Dendritic cell treated with granulocyte-macrophage colony-stimulating factor and Interleukin-4, amounts not matched to agents 40 ng/mL and 50 ng/mL, for 4 days (primary cell): ENCODE measurements at regions of chr1 and their contacts with region 1.

Region 1: DNA sequence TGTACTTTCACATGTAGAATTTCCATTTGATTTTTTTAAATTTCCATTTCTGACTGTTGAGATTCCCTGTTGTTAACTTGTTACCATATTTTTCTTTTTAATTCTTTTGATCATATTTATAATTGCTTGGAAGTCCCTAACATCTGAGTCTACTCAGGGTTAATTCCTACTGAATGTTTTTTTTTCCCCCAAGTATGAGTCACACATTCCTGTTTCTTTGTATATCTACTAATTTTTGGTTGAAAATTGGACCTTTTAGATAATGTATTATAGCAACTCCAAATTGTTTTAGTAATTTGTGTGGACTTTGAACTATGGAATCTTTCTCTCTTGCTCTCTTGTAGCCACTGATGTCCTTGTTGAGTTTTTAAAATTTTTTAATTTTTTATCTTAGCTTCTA is 54.6 kb downstream of the STXBP3 start:
- H3K4me3 Mint-ChIP-seq: no peak overlapping the region
- H3K27ac Mint-ChIP-seq: no peak overlapping the region
- H3K4me1 Mint-ChIP-seq: no peaks in the 10 kb centered on the region
- H3K27me3 Mint-ChIP-seq: no peaks in the 10 kb centered on the region

Region 2: DNA sequence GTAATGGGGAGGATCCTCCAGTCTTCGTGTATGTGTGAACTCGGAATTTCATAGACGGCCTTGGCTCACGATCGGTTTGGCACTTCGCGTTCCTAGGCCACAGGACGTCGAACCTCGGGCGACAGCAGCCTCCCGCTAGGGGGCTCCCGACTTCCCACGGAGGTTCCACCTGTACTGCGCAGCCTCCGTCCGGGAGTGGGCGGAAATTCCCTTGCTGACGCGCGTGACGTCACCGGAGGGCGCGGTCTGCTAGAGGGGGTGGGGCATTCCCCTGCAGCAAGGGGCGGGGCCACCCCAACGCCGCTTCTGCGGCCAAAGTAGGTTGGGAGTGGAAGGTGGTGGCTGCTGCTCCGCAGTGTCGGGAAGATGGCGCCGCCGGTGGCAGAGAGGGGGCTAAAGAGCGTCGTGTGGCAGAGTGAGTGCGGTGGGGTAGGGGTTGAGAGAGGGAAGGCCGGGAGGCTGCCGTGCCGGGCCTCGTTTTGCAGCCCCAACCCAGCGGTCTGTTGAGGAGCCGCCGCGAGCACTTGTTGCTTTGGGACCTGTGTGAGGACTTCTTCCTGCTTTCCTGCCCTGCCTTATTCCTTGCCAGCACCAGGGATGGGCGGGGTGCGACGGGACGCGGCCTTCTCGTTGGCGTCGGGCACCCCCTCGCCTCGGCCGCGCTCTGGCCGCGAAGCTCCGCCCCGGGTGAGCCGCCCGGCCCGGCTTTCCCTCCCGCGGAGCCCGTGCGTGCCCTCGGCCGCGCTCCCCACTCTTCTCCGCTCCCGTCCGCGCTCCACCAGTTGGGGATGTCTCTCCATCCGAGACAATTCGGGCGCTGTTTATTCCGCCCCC is 54.5 kb before region 1 on chr1 and contains the start of gene STXBP3:
- intact Hi-C with region 1: no loop called
- H3K4me3 Mint-ChIP-seq: peak within 1 kb of the TSS; percentile 91
- H3K27ac Mint-ChIP-seq: peak within 1 kb of the TSS; percentile 100
- H3K4me1 Mint-ChIP-seq: peaks cover 38% of the 10 kb centered on the region
- H3K27me3 Mint-ChIP-seq: peaks cover 2% of the 10 kb centered on the region

Region 3: DNA sequence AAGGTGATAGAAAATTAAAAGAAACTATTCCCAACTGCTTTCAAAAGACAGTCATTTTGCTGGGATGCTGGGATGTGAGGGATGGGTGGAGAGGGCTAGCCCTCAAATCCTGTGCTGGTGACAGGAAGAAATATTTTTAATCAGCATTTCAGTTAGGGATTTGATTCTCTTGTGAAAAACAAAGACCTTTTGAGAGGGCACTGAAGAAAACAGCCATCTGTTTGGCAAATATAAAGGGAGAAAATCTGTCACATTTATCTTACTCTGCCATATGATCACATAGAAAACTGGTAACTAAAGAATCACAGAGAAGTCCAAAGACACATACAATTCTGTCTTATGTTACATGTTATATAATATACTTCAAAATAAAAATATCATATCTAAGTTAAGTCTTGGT is 42.3 kb before region 1 on chr1:
- intact Hi-C with region 1: loop called (anchors 5 kb)
- H3K4me3 Mint-ChIP-seq: no peak overlapping the region
- H3K27ac Mint-ChIP-seq: no peak overlapping the region
- H3K4me1 Mint-ChIP-seq: no peaks in the 10 kb centered on the region
- H3K27me3 Mint-ChIP-seq: no peaks in the 10 kb centered on the region

Region 4: DNA sequence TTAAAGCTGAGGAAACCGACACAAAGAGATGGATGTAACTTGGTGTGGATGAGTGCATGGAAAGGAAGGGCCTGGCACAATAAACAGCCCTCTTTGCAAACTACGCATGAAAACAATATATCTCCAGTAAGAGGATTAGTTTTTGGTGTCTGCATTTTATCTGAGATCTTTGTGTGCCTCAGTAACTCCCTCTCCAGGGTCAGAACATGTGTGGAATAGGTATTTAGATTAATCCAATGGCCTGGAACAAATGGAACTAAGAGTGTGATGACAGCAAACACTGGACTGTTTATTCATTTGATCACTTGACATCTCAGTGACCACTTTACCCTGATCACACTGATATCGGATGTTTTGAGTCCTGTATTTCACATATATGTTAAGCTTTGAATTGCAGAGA is 10.5 kb after region 1 on chr1:
- intact Hi-C with region 1: loop called (anchors 1 kb)
- H3K4me3 Mint-ChIP-seq: no peak overlapping the region
- H3K27ac Mint-ChIP-seq: no peak overlapping the region
- H3K4me1 Mint-ChIP-seq: no peaks in the 10 kb centered on the region
- H3K27me3 Mint-ChIP-seq: no peaks in the 10 kb centered on the region

Region 5: GRCh38 chr1:109011335-109011734 is 210.2 kb after region 1 on chr1:
- intact Hi-C with region 1: loop called (anchors 10 kb)
- H3K4me3 Mint-ChIP-seq: no peak overlapping the region
- H3K27ac Mint-ChIP-seq: no peak overlapping the region
- H3K4me1 Mint-ChIP-seq: no peaks in the 10 kb centered on the region
- H3K27me3 Mint-ChIP-seq: no peaks in the 10 kb centered on the region